ENCODE measurements at regions of chr10 and their contacts with region 1.

Region 1: GRCh38 chr10:96025566-96025965 is 17.8 kb upstream of the CCNJ start:
- DNase-seq: no peak
- ATAC-seq: peak; percentile 99
- H3K4me3 ChIP-seq: no peak overlapping the region
- H3K27ac ChIP-seq: no peak overlapping the region
- H3K4me1 ChIP-seq: no peaks in the 10 kb centered on the region
- H3K27me3 ChIP-seq: no peaks in the 10 kb centered on the region
- CTCF ChIP-seq: peak; percentile 15 to 44 (median 35); a peak in 4 of 6 replicates
- EP300 ChIP-seq: no peak
- POLR2A ChIP-seq: no peak
- RAD21 ChIP-seq: no peak

Region 2: DNA sequence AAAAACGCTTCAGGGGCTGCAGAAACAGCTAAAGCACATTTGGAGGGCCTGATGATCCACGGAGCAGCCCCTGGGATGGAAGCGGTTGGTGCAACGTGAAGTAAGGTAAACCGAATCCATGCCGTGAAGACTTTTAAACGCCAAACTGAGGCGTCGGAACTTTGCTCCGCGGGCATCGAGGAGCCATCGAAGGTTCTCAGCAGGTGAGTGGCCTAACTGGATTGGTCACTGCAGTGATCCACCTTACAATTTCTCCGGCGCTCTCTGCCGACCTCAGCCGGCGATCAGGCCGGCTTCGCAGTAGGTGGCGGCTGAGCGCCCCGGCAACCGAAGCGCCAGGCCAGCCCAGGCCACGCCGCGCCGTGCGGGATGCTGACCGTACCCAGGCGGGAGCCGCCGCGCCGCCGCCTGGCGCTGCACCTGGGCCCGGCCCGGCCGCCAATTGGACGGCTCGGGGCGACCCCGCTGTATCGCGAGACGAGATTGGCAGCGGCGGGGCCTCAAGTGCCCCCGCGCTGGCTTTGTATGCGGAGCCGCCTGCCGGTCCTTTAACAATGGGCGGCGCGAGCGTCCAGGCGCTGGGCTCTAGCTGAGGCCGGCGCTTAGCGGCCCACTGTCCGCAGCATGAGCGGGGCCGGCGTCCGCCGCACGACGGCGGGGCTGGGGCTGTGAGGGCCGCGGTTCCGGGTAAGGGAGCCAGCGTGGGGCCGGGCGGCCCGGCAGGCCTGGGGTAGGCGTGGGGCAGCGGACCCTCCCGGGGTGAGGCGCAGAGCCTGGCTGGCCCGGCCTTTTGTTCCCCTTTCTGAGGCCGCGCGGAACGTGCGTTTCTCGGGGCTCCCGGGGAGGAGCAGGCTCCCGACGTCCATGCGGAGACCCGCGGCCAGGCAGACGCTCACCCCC is 17.7 kb after region 1 on chr10 and contains the start of gene CCNJ:
- CTCF ChIA-PET with region 1: no interaction called
- POLR2A ChIA-PET with region 1: no interaction called
- RAD21 ChIA-PET with region 1: no interaction called
- SMC1A ChIA-PET with region 1: no interaction called
- in situ Hi-C with region 1: no loop called
- intact Hi-C with region 1: no loop called
- DNase-seq: peak; percentile 39
- ATAC-seq: peak; percentile 90
- H3K4me3 ChIP-seq: peak within 1 kb of the TSS; percentile 95
- H3K27ac ChIP-seq: peak within 1 kb of the TSS; percentile 74
- H3K4me1 ChIP-seq: peaks cover 6% of the 10 kb centered on the region
- H3K27me3 ChIP-seq: no peaks in the 10 kb centered on the region
- CTCF ChIP-seq: peak in 1 of 3 experiments; percentile 21; a peak in 1 of 6 replicates
- EP300 ChIP-seq: no peak
- POLR2A ChIP-seq: peak; percentile 84
- RAD21 ChIP-seq: no peak
- polyA plus RNA-seq, gene CCNJ: 0.56 to 1.5 TPM

Region 3: GRCh38 chr10:96222441-96222840 is 196.9 kb after region 1 on chr10:
- CTCF ChIA-PET with region 1: no interaction called
- POLR2A ChIA-PET with region 1: no interaction called
- RAD21 ChIA-PET with region 1: no interaction called
- SMC1A ChIA-PET with region 1: no interaction called
- in situ Hi-C with region 1: loop called (anchors 5 kb)
- intact Hi-C with region 1: no loop called
- DNase-seq: no peak
- ATAC-seq: no peak
- H3K4me3 ChIP-seq: no peak overlapping the region
- H3K27ac ChIP-seq: no peak overlapping the region
- H3K4me1 ChIP-seq: no peaks in the 10 kb centered on the region
- H3K27me3 ChIP-seq: no peaks in the 10 kb centered on the region
- CTCF ChIP-seq: no peak
- EP300 ChIP-seq: no peak
- POLR2A ChIP-seq: no peak
- RAD21 ChIP-seq: no peak

Region 4: DNA sequence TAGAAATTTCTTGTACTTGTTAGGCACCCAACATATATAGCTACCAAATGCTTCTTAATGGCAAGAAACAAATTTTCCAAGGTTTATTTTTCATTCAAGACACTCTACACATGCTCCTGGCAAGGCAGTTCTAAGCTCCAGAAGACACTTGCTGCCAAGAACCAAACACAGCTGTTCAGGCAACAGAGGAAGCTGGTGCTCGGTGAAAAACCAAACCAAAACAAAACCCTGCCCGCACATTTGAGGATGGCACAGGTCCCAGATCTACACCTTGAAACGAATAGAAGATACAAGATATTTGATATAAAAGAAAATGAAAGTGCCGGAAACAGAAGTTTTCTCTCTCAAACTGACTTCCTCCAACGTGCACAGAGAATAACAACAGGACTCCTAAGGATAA is 273.8 kb after region 1 on chr10:
- CTCF ChIA-PET with region 1: no interaction called
- POLR2A ChIA-PET with region 1: no interaction called
- RAD21 ChIA-PET with region 1: no interaction called
- SMC1A ChIA-PET with region 1: no interaction called
- in situ Hi-C with region 1: loop called (anchors 5 kb)
- intact Hi-C with region 1: no loop called
- DNase-seq: no peak
- ATAC-seq: peak; percentile 45; the same call in 2 of the 3 replicates
- H3K4me3 ChIP-seq: 0 out of 2 replicates have a peak overlapping the region, but pooled peaks have one; percentile 19
- H3K27ac ChIP-seq: no peak overlapping the region
- H3K4me1 ChIP-seq: peaks cover 6% of the 10 kb centered on the region; the same call in 1 of the 2 replicates
- H3K27me3 ChIP-seq: no peaks in the 10 kb centered on the region
- CTCF ChIP-seq: no peak
- EP300 ChIP-seq: no peak
- POLR2A ChIP-seq: no peak
- RAD21 ChIP-seq: no peak

Region 5: DNA sequence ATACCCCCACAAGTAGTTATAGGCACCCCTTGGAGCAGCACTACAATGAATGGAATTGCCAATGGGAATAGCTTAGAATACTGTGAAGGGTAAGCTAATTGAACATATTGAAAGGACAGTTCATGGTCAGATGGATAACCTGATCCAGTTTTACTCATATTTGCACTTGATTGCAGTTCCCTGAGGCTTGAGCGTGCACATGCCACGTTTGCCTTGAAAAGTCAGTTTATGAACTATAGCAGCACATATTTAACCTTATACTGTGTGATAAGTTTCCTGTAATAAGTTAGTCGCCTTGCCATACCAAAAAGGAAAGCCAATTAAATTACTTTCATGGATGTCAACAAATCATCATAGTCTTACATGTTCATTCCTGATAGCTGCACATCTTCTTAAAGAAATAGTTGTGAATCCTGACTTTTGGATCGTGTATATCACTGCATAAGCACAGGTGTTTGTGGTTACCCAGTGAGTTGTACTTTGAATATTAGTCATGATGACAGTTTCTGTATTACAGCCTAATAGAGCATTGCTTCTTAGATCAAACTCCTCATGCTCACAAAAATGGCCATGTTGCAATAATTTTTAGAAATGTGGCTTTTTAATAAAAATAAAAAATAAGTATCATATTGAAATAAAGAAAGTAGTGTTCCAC is 300.3 kb after region 1 on chr10:
- CTCF ChIA-PET with region 1: no interaction called
- POLR2A ChIA-PET with region 1: no interaction called
- RAD21 ChIA-PET with region 1: no interaction called
- SMC1A ChIA-PET with region 1: no interaction called
- in situ Hi-C with region 1: loop called (anchors 10 kb)
- intact Hi-C with region 1: no loop called
- DNase-seq: peak; percentile 23
- ATAC-seq: peak; percentile 98
- H3K4me3 ChIP-seq: no peak overlapping the region
- H3K27ac ChIP-seq: peak overlapping the region; percentile 42; the same call in 1 of the 2 replicates
- H3K4me1 ChIP-seq: peaks cover 16% of the 10 kb centered on the region
- H3K27me3 ChIP-seq: no peaks in the 10 kb centered on the region; a peak in 1 of 4 replicates
- CTCF ChIP-seq: no peak
- EP300 ChIP-seq: peak in 1 of 2 experiments; percentile 55; a peak in 2 of 4 replicates
- POLR2A ChIP-seq: no peak
- RAD21 ChIP-seq: no peak

Measured in GM12878 (cell line).